Motor neuron (in vitro differentiated cells): ENCODE measurements at regions of chr17 and their contacts with region 1.

Region 1: GRCh38 chr17:979538-980405 is at the start of gene NXN:
- ATAC-seq: peak; percentile 76 to 88 (median 83)
- H3K4me3 ChIP-seq: peak within 1 kb of the TSS; percentile 60 to 95 (median 84)
- H3K27ac ChIP-seq: peak within 1 kb of the TSS; percentile 74 to 86
- H3K4me1 ChIP-seq: peaks cover 6 to 11% of the 10 kb centered on the region in 2 donors
- total RNA-seq, gene NXN: 1.0 to 66.4 (median 22.6) TPM

Region 2: GRCh38 chr17:794876-795275 is 184.9 kb before region 1 on chr17:
- in situ Hi-C with region 1: loop called (anchors 5 to 25 kb)
- ATAC-seq: peak; percentile 76 to 95 (median 89)
- H3K4me3 ChIP-seq: no peak overlapping the region
- H3K27ac ChIP-seq: peak overlapping the region; percentile 7 to 8
- H3K4me1 ChIP-seq: peaks cover 16 to 20% of the 10 kb centered on the region in 2 donors